AG04450 (cell line): ENCODE measurements at regions of chr12 and their contacts with region 1.

Region 1: GRCh38 chr12:13255792-13256691 is 59.5 kb downstream of the EMP1 start:
- DNase-seq: peak; percentile 86
- H3K4me3 ChIP-seq: peak overlapping the region; percentile 51
- H3K27ac ChIP-seq: no peak overlapping the region
- H3K27me3 ChIP-seq: no peaks in the 10 kb centered on the region
- CTCF ChIP-seq: peak; percentile 99

Region 2: DNA sequence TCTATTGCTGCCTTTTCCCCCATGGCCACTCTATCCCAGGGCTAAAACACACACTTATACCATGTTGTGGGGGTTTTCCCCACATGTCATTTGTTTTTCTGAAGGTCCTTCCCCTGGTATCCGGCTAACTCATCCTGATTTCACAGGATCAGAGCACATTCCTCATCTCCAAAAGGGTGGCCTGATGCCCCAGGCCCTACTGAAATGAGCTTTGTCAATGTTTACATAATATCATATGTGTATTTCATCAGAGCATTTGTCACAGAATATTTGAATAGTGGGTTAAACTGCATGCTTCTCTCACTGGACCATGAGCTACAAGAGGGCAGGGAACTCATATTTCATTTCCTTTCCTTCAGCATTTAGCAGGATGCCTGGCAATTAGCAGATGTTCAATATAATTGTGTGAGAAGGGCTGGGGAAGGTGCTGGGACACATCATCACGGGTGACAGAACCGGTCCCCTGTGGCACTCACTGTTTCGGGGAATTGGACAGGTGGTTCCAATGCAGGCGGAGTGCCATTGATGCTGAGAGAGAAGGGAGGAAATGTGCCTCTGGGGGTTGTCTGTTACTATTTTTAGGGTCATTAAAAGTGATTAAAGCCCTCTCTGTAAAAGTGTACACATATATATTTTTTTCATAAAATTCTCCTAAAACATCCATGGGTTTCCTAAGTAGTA is 32.7 kb before region 1 on chr12:
- CTCF ChIA-PET with region 1: interaction called, 12 read pairs
- POLR2A ChIA-PET with region 1: interaction called, 3 read pairs
- DNase-seq: peak; percentile 69
- H3K4me3 ChIP-seq: no peak overlapping the region
- H3K27ac ChIP-seq: peak overlapping the region; percentile 83
- H3K27me3 ChIP-seq: no peaks in the 10 kb centered on the region
- CTCF ChIP-seq: no peak

Region 3: GRCh38 chr12:13241833-13242488 is 14.1 kb before region 1 on chr12:
- CTCF ChIA-PET with region 1: interaction called, 61 read pairs
- POLR2A ChIA-PET with region 1: no interaction called
- DNase-seq: no peak
- H3K4me3 ChIP-seq: no peak overlapping the region
- H3K27ac ChIP-seq: no peak overlapping the region
- H3K27me3 ChIP-seq: no peaks in the 10 kb centered on the region
- CTCF ChIP-seq: no peak

Region 4: DNA sequence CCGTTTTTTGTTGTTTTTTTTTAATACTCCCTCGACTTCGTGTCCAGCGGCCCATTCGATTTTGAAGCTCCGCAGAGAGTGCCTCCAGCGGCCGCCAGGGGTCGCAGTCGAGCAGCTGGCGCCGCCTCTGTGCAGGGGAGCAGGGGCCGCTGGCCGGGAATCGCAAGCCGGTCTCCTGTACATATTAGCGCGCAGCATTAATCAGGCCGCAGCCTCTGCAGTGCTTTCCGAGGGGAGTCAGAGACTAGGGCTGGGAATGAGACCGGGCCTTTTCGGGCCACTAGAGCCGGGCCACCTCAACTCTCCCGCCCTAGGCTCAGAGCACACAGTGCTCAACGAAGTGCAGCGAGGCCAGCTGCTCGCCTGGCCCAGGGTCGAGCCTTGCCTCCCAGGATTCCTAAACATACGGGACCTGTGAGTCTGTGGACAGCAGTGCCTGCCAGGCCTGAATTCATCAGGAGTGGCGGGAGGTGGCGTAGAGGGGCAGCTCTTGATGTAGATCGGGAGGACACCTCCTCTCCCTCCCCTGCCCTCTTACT is 22.3 kb after region 1 on chr12:
- CTCF ChIA-PET with region 1: interaction called, 48 read pairs
- POLR2A ChIA-PET with region 1: no interaction called
- DNase-seq: peak; percentile 36
- H3K4me3 ChIP-seq: 0 out of 2 replicates have a peak overlapping the region, but pooled peaks have one; percentile 17
- H3K27ac ChIP-seq: no peak overlapping the region
- H3K27me3 ChIP-seq: peaks cover 41% of the 10 kb centered on the region
- CTCF ChIP-seq: peak; percentile 98

Region 5: GRCh38 chr12:13661005-13661887 is 405.2 kb after region 1 on chr12:
- CTCF ChIA-PET with region 1: interaction called, 28 read pairs
- POLR2A ChIA-PET with region 1: no interaction called
- DNase-seq: peak; percentile 3
- H3K4me3 ChIP-seq: no peak overlapping the region
- H3K27ac ChIP-seq: no peak overlapping the region
- H3K27me3 ChIP-seq: no peaks in the 10 kb centered on the region
- CTCF ChIP-seq: peak; percentile 86